Ovary (tissue), 10 donors: ENCODE measurements at regions of chr22 and their contacts with region 1.

Region 1: DNA sequence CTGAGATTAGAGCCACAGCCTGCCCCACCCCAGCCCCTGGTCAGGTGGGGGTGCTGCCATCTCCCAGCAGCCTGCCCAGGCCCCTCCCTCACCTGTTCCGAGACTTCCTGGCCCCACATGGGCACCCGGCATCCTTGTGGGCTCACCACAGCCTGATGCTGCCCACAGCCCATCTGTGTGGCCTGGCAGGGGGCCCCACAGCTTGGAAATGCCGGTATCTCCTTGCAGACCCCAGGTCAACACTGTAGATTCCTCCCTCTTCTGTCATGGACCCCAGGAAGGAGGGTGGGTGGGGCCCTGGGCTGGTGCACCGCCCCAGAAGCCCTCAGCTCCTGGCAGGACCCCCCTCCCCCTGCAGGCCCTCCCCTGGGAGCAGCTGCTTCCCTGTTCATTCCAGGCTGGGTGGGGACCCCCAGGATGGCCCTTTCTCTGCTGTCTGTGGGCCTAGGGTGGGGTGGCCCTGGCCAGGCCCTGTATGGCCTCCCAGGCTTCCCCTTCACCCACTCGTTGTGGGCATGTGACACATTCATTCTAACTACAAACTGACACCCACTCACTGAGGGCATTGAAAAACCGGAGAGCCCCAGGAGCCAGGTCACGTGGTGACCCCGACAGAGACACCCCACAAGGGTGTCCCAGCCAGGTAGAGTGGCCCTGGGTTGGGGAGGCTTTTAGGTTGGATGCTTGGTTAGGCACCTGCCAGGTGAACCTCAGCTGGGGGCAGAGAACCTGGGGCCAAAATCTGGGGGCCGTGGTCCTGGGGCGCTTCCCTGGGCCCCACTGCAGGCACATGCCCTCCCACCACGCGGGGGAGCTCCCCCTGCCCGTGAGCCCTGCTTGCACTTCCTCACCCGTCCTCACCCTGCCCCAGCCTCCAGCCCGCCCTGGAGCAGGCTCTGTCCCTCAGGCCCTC is 44.1 kb upstream of the CCDC188 start:
- DNase-seq: no peak
- H3K4me3 ChIP-seq: no peak overlapping the region
- H3K27ac ChIP-seq: no peak overlapping the region
- H3K4me1 ChIP-seq: peaks cover 5% of the 10 kb centered on the region
- H3K27me3 ChIP-seq: no peaks in the 10 kb centered on the region
- CTCF ChIP-seq: no peak
- EP300 ChIP-seq: no peak
- POLR2A ChIP-seq: no peak

Region 2: DNA sequence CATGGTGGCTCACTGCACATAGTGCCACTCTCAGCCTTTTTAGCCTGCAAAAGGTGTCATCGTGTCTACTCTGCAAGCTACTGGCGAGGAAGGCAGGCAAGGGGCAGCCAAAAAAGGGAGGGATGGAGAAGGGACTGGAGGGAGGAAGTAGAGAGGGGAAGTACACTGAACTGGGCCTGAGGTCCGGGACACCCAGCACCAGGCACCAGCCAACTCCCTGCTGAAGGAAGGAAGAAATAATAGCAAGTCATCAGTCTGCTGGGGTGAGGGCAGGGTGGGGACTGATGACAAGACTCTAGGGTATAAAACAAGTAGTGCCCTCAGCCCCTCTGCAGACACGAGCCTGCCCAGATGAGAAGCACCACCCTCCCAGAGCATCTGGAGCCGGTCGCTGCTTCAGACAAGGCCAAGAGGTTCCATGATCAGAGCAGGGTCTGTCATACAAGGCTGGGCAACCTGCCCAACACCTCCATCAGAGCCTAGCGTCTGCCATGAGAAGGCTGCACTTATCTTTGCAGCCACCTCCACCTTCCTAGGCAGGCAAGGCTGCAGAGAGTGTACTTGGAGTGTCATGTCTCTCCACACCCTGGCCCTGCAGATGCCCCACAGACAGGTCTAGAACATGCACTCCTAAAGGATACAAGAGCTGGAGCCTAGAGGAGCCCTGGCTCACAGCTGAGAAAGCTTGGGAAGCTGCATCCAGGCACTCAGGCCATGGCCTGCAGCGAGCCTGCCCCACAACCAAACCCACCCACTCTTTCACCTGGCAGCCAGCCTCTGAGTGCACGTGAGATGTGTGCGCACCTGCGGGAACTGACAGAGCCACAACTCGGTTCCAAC is 262.4 kb before region 1 on chr22:
- intact Hi-C with region 1: no loop called
- DNase-seq: no peak
- H3K4me3 ChIP-seq: no peak overlapping the region
- H3K27ac ChIP-seq: no peak overlapping the region
- H3K4me1 ChIP-seq: no peaks in the 10 kb centered on the region
- H3K27me3 ChIP-seq: no peaks in the 10 kb centered on the region
- CTCF ChIP-seq: no peak
- EP300 ChIP-seq: no peak
- POLR2A ChIP-seq: no peak

Region 3: GRCh38 chr22:20116951-20117645 is 77.8 kb before region 1 on chr22 and contains the start of gene TRMT2A:
- intact Hi-C with region 1: no loop called
- DNase-seq: peak; percentile 96 to 99 (median 98)
- H3K4me3 ChIP-seq: peak within 1 kb of the TSS; percentile 81
- H3K27ac ChIP-seq: peak within 1 kb of the TSS; percentile 66 to 75
- H3K4me1 ChIP-seq: peaks cover 10% of the 10 kb centered on the region
- H3K27me3 ChIP-seq: no peaks in the 10 kb centered on the region
- CTCF ChIP-seq: peak in 1 of 3 donors; percentile 38
- EP300 ChIP-seq: no peak
- POLR2A ChIP-seq: peak; percentile 31
- total RNA-seq, gene TRMT2A: 35.6 to 59.7 (median 50.1) TPM

Region 4: DNA sequence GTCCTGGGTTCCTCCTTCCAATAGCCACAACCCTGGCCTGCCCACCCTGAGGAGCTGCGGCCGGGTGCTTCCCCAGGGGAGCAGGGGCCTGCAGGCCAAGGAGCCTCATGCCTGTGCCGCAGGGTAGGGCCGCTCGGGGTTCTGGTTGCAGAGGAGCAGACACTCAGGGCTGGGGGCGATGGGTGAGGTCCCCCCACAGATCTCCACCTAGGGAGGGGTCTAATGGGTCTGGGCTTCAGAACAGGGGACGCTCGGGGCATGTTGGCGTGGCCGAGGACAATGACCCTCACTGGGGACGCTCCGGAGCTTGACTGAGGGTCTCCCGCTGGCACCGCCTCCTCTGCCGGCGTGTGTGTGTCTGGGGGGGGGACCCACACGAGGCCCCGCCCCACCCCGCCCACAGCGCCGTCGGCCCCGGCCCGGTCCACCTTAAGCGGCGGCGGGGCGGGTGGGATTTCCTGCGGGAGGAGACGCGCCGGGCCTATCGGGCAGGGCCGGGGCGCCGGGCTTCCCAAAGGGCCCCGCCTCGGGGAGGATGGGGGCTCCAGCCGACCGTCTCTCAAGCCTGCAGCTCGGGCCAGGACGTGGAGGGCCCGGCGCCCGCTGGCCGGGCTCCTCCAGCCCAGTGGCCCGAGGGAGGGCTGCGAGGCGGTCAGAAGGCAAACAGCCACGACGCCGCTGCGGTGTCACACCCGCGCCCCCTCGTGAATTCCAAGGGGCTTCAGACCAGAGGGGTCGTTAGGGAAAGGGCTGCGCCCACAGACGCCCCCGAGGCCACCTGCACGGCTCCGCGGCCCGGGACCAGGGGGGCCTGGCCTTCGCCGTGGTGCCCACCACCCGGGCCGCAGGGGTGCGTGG is 64.0 kb before region 1 on chr22:
- intact Hi-C with region 1: loop called in 1 of 4 experiments (anchors 10 kb)
- DNase-seq: peak; percentile 82 to 90 (median 84)
- H3K4me3 ChIP-seq: peak overlapping the region; percentile 99
- H3K27ac ChIP-seq: peak overlapping the region; percentile 85 to 94
- H3K4me1 ChIP-seq: peaks cover 7% of the 10 kb centered on the region
- H3K27me3 ChIP-seq: no peaks in the 10 kb centered on the region
- CTCF ChIP-seq: no peak
- EP300 ChIP-seq: no peak
- POLR2A ChIP-seq: no peak